Dendritic cell treated with granulocyte-macrophage colony-stimulating factor and Interleukin-4, amounts not matched to agents 40 ng/mL and 50 ng/mL, for 4 days (primary cell): ENCODE measurements at regions of chr3 and their contacts with region 1.

Region 1: GRCh38 chr3:61239871-61240270 is 11.4 kb downstream of the FHIT start:
- H3K4me3 Mint-ChIP-seq: no peak overlapping the region
- H3K27ac Mint-ChIP-seq: no peak overlapping the region
- H3K4me1 Mint-ChIP-seq: peaks cover 4% of the 10 kb centered on the region
- H3K27me3 Mint-ChIP-seq: no peaks in the 10 kb centered on the region

Region 2: GRCh38 chr3:61015859-61016258 is 224.0 kb before region 1 on chr3:
- intact Hi-C with region 1: loop called (anchors 10 kb)
- H3K4me3 Mint-ChIP-seq: no peak overlapping the region
- H3K27ac Mint-ChIP-seq: peak overlapping the region; percentile 65
- H3K4me1 Mint-ChIP-seq: peaks cover 11% of the 10 kb centered on the region
- H3K27me3 Mint-ChIP-seq: no peaks in the 10 kb centered on the region

Region 3: DNA sequence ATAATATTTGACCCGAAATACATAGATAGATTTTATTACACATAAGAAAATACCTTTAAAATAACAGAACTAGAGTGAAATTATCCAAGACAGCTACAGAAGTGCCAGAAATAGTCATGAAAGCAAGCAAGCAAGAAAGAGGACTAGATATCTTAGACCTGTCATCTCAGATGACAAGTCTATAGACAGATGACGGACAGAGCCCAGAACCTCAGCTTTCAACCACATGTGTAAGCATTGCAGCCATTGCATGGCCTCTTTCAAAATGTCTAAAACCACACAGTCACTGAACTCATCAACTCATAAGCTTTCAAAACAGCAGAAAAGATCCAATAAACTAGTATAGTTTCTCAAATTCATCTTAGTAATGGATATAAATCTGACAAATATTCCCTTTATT is 71.2 kb after region 1 on chr3:
- intact Hi-C with region 1: no loop called
- H3K4me3 Mint-ChIP-seq: no peak overlapping the region
- H3K27ac Mint-ChIP-seq: no peak overlapping the region
- H3K4me1 Mint-ChIP-seq: no peaks in the 10 kb centered on the region
- H3K27me3 Mint-ChIP-seq: peaks cover 9% of the 10 kb centered on the region

Region 4: DNA sequence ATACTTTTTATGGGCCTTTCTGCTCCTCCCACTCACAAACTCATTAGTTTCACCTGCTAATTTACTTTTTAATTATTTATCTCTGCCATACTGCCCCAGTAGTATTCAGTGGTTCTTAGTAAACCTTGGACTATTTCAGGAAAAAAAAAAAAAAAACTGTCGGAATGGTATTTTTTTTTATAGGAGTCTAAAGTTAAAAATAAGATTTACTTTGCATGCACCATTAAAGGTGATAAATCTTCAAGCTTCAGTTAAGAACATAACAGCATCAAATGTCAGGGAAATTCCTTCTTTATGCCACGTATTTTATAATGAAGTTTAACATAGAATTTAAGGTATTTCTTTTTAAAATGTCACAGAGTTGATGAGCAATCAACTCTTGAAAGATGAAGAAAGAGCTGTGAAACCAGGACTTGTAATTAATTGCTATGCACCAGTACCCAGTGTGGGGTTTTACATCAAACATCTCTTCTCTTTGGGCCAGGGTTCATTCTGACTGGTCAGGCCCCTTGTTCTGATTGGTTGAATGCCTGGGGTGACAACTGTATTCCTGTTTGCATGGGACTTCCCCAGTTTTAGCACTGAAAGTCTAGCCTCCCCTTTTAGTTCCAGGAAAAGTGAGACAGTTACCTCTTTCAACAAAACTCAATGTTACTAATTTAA is 281.2 kb after region 1 on chr3:
- intact Hi-C with region 1: no loop called
- H3K4me3 Mint-ChIP-seq: no peak overlapping the region
- H3K27ac Mint-ChIP-seq: no peak overlapping the region
- H3K4me1 Mint-ChIP-seq: no peaks in the 10 kb centered on the region
- H3K27me3 Mint-ChIP-seq: no peaks in the 10 kb centered on the region